Panc1 (cell line): ENCODE measurements at regions of chr17 and their contacts with region 1.

Region 1: DNA sequence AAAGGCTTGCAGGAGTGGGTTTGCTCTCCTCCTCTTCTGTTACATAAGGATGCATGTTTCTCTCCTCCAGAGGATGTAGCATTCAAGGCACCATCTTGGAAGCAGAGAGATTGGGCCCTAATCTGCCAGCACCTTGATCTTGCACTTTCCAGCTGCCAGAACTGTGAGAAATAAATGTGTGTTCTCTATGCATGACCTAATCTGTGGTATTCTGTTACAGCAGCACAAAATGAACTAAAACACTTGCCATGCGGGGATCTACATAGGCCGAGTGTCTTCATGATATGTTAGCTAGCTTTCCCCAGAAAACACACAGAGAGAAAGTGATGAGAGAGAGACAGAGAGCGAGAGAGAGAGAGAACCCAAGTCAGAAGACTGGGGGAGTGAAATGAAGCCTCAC is 273.5 kb downstream of the UTP18 start:
- DNase-seq: no peak
- ATAC-seq: no peak
- H3K4me3 ChIP-seq: no peak overlapping the region
- H3K27ac ChIP-seq: no peak overlapping the region
- H3K4me1 ChIP-seq: no peaks in the 10 kb centered on the region
- H3K27me3 ChIP-seq: no peaks in the 10 kb centered on the region
- CTCF ChIP-seq: no peak

Region 2: GRCh38 chr17:51298508-51299371 is 235.1 kb before region 1 on chr17:
- CTCF ChIA-PET with region 1: interaction called, 3 read pairs
- POLR2A ChIA-PET with region 1: no interaction called
- in situ Hi-C with region 1: no loop called
- intact Hi-C with region 1: loop called (anchors 2 kb)
- DNase-seq: peak; percentile 18
- ATAC-seq: peak; percentile 74
- H3K4me3 ChIP-seq: no peak overlapping the region
- H3K27ac ChIP-seq: no peak overlapping the region
- H3K4me1 ChIP-seq: no peaks in the 10 kb centered on the region
- H3K27me3 ChIP-seq: no peaks in the 10 kb centered on the region
- CTCF ChIP-seq: peak; percentile 78

Region 3: DNA sequence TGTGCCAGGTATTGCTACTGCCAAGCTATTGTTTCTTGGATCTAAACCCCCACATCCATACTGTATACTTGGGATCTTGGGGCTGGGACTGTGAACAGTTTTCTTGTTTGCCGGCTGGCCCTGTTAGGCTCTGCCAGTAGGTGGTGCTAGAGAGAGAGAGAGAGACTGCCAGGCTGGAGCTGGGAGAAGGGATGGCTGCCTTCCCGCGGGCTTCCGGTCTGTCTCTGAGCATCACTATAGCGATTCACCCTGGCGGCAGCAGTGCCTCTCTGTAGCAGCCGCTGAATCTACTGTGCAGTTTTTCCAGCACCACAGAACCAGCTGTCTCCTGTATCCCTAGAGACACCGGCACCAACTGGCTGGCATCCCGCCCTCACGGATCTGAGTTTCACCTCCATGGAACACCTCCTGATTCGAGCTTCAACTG is 72.2 kb before region 1 on chr17:
- CTCF ChIA-PET with region 1: no interaction called
- POLR2A ChIA-PET with region 1: interaction called, 5 read pairs
- in situ Hi-C with region 1: no loop called
- intact Hi-C with region 1: loop called (anchors 2 kb)
- DNase-seq: peak; percentile 27
- ATAC-seq: peak; percentile 93
- H3K4me3 ChIP-seq: no peak overlapping the region
- H3K27ac ChIP-seq: no peak overlapping the region
- H3K4me1 ChIP-seq: no peaks in the 10 kb centered on the region
- H3K27me3 ChIP-seq: peaks cover 11% of the 10 kb centered on the region
- CTCF ChIP-seq: peak; percentile 93

Region 4: GRCh38 chr17:51548125-51548524 is 14.3 kb after region 1 on chr17:
- CTCF ChIA-PET with region 1: no interaction called
- POLR2A ChIA-PET with region 1: no interaction called
- in situ Hi-C with region 1: no loop called
- intact Hi-C with region 1: no loop called
- DNase-seq: no peak
- ATAC-seq: no peak
- H3K4me3 ChIP-seq: no peak overlapping the region
- H3K27ac ChIP-seq: no peak overlapping the region
- H3K4me1 ChIP-seq: no peaks in the 10 kb centered on the region
- H3K27me3 ChIP-seq: no peaks in the 10 kb centered on the region
- CTCF ChIP-seq: no peak